ENCODE measurements at regions of chr2 and their contacts with region 1.

Region 1: DNA sequence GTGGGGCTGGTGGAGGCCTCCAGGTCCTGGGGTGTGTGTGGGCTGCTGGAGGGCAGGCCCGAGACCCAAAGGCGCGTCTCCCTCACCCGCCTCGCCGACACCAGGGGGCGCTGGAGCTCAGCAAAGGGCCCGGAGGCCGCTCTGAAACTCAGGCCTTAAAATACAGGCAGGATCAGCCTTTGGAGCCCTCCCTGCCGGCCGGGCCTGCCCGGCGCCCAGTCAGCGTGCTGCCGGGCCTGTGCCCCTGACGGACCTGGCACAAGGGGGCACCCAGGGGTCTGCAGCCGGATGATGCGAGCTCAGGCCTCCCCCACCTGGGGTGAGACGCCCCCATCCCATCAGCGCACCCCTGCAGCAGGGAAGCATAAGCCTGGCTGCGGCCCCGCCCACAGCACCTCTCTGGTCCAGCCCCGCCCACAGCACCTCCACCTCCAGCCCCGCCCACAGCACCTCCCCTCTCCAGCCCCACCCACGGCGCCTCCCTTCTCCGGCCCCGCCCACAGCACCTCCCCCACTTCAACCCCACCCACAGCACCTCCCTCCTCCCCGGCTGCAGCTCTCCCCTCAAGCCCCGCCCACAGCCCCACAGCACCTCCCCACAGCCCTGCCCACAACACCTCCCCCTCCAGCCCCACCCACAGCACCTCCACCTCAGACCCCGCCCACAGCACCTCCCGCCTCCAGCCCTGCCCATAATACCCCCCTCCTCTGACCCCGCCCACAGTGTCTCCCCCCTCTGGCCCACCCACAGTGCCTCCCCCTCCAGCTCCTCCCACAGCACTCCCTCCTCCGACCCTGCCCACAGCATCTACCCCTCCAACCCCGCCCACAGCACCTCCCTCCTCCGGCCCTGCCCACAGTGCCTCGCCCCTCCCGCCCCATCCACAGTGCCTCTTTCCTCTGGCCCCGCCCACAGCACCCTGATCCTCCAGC is 92.8 kb upstream of the OTOS start:
- DNase-seq: peak; percentile 92
- H3K4me3 ChIP-seq: peak overlapping the region in 1 of 2 donors; percentile 34
- H3K27ac ChIP-seq: peak overlapping the region; percentile 44 to 50
- H3K4me1 ChIP-seq: no peaks in the 10 kb centered on the region
- H3K27me3 ChIP-seq: no peaks in the 10 kb centered on the region
- CTCF ChIP-seq: peak; percentile 93 to 98 (median 96)
- POLR2A ChIP-seq: peak; percentile 24

Region 2: GRCh38 chr2:240310645-240311044 is 77.4 kb after region 1 on chr2:
- intact Hi-C with region 1: no loop called
- DNase-seq: no peak
- H3K4me3 ChIP-seq: no peak overlapping the region
- H3K27ac ChIP-seq: no peak overlapping the region
- H3K4me1 ChIP-seq: no peaks in the 10 kb centered on the region
- H3K27me3 ChIP-seq: no peaks in the 10 kb centered on the region
- CTCF ChIP-seq: no peak
- POLR2A ChIP-seq: no peak

Region 3: DNA sequence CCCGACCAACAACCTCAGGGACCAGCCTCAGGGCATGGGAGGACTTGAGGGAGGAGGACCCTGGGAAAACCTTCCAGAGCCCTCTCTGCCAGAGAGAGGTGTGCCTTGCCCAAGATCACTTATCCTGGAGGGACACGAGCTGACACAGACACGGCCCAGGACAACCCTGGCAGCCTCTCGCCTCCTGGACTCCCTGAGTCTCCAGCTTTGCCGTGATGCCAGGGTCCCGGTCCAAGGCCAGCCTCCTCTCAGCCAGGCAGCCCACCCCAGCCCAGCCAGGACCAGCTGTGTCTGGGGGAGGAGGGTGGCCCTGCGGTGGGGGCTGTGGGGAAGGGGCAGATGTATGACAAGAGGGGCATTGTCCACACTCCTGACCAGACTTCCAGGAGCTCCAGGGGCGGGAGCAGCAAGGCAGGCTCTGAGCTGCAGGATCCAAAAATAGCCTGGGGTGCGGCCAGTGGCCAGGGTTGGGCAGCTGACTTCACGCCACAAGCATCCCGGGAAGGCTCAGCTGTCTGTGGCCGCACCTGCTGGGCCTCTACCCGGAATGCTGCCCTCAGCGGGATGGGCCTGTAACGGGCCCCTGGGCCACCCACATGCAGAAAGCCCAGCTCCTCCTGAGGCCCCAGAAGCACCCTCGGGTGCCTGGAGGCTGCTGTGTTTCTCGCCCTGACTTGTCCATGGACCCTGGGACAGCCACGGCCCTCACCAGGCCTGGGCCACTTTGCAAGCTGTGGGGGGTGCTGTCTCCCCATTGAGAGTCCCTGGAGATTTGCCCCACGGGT is 136.8 kb after region 1 on chr2:
- intact Hi-C with region 1: loop called (anchors 5 kb)
- DNase-seq: peak; percentile 39
- H3K4me3 ChIP-seq: no peak overlapping the region
- H3K27ac ChIP-seq: peak overlapping the region; percentile 39 to 41
- H3K4me1 ChIP-seq: peaks cover 4% of the 10 kb centered on the region
- H3K27me3 ChIP-seq: no peaks in the 10 kb centered on the region
- CTCF ChIP-seq: no peak
- POLR2A ChIP-seq: no peak